HCT116 (cell line): ENCODE measurements at regions of chr12 and their contacts with region 1.

Region 1: GRCh38 chr12:113462117-113462774 is 9.4 kb downstream of the LHX5 start:
- DNase-seq: peak; percentile 67
- ATAC-seq: peak; percentile 85
- H3K4me3 ChIP-seq: no peak overlapping the region
- H3K27ac ChIP-seq: no peak overlapping the region
- H3K4me1 ChIP-seq: peaks cover 3 to 11% of the 10 kb centered on the region in 2 experiments; a peak in 3 of 4 replicates
- H3K27me3 ChIP-seq: peaks cover 12% of the 10 kb centered on the region; the same call in 1 of the 2 replicates
- CTCF ChIP-seq: peak; percentile 67 to 87 (median 75)
- POLR2A ChIP-seq: no peak
- RAD21 ChIP-seq: peak; percentile 72

Region 2: GRCh38 chr12:113366827-113367226 is 95.4 kb before region 1 on chr12:
- CTCF ChIA-PET with region 1: no interaction called
- POLR2A ChIA-PET with region 1: no interaction called
- RAD21 ChIA-PET with region 1: no interaction called
- intact Hi-C with region 1: no loop called
- DNase-seq: no peak
- ATAC-seq: no peak
- H3K4me3 ChIP-seq: no peak overlapping the region
- H3K27ac ChIP-seq: no peak overlapping the region
- H3K4me1 ChIP-seq: peaks cover 0 to 4% of the 10 kb centered on the region in 2 experiments; a peak in 1 of 4 replicates
- H3K27me3 ChIP-seq: no peaks in the 10 kb centered on the region
- CTCF ChIP-seq: no peak
- POLR2A ChIP-seq: no peak
- RAD21 ChIP-seq: no peak

Region 3: GRCh38 chr12:113772505-113773030 is 310.3 kb after region 1 on chr12:
- CTCF ChIA-PET with region 1: interaction called, 11 read pairs
- POLR2A ChIA-PET with region 1: no interaction called
- RAD21 ChIA-PET with region 1: no interaction called
- intact Hi-C with region 1: loop called (anchors 1 kb)
- DNase-seq: no peak
- ATAC-seq: no peak
- H3K4me3 ChIP-seq: peak overlapping the region; percentile 74 to 77
- H3K27ac ChIP-seq: peak overlapping the region; percentile 63
- H3K4me1 ChIP-seq: peaks cover 0 to 14% of the 10 kb centered on the region in 2 experiments; a peak in 3 of 4 replicates
- H3K27me3 ChIP-seq: no peaks in the 10 kb centered on the region
- CTCF ChIP-seq: no peak
- POLR2A ChIP-seq: no peak
- RAD21 ChIP-seq: no peak